Heart right ventricle (tissue), 16 donors: ENCODE measurements at regions of chr11 and their contacts with region 1.

Region 1: GRCh38 chr11:47724041-47724729 is 9.0 kb upstream of the AGBL2 start:
- DNase-seq: no peak
- ATAC-seq: peak in 7 of 8 donors; percentile 29 to 85 (median 48)
- H3K4me3 ChIP-seq: no peak overlapping the region
- H3K27ac ChIP-seq: peak overlapping the region in 6 of 10 donors; percentile 4 to 57 (median 38)
- H3K4me1 ChIP-seq: peaks cover 0 to 16% (median 10%) of the 10 kb centered on the region in 9 donors
- H3K27me3 ChIP-seq: no peaks in the 10 kb centered on the region
- CTCF ChIP-seq: no peak

Region 2: DNA sequence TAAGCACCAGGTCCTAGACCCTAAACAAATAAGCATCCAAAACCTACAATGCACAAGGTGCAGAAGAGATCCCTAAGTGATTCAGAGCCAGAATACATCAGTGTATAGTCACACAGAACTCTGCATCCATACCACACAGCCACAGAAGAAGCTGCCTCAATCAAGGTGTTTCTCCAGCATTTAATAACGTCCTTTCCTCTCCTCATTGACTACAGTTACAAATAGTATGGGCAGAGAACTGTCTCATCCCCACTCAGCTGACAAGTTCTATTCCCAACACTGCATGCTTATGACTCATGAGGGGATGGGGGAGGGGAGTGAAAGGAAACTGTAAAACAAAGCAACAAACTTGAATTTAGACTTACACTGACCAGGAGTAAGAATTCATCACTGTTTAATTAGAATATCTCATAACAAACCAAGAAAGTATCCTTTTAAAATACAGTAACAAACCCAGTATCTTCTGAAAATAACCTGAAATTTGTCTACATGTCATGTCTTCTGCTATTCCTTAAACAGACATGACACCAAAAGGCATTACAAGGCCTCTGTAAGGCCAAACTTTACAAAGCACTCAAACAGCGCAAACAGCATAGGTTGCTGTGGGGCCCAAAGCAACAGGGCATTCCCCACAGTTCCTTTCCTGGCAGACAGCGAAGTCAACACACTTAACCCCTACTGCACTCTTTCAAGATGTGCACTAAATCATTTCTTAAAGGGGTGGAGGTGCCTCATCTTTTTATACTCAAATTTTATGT is 200.5 kb before region 1 on chr11:
- intact Hi-C with region 1: no loop called
- DNase-seq: peak in 1 of 2 donors; percentile 66
- ATAC-seq: peak; percentile 74 to 93 (median 84)
- H3K4me3 ChIP-seq: peak overlapping the region in 8 of 10 donors; percentile 9 to 43 (median 37)
- H3K27ac ChIP-seq: peak overlapping the region; percentile 19 to 88 (median 70)
- H3K4me1 ChIP-seq: peaks cover 16 to 90% (median 53%) of the 10 kb centered on the region in 9 donors
- H3K27me3 ChIP-seq: no peaks in the 10 kb centered on the region
- CTCF ChIP-seq: no peak

Region 3: GRCh38 chr11:47758076-47758475 is 33.9 kb after region 1 on chr11:
- intact Hi-C with region 1: loop called in 1 of 10 experiments (anchors 5 kb)
- DNase-seq: no peak
- ATAC-seq: no peak
- H3K4me3 ChIP-seq: no peak overlapping the region
- H3K27ac ChIP-seq: no peak overlapping the region
- H3K4me1 ChIP-seq: peaks cover 0 to 10% (median 0%) of the 10 kb centered on the region in 9 donors
- H3K27me3 ChIP-seq: no peaks in the 10 kb centered on the region
- CTCF ChIP-seq: no peak

Region 4: DNA sequence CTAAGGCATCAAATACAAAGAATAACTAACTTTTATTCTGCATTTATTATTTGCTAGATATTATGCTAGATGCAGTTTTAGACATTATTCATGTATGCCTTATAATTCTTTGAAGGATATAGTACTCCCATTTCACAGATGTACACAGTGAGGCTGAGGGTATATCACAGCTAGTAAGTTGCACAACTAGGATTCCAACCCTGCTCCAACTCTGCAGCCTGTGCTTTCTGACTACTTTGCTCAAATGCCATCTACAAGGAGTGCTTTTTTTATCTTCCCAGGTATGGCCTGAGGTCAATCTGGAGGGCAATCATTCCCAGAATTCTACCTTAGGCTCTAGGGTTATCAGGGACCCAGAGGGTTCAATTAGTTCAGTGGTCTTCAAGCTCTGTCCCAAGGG is 95.6 kb after region 1 on chr11:
- intact Hi-C with region 1: loop called in 1 of 10 experiments (anchors 10 kb)
- DNase-seq: no peak
- ATAC-seq: no peak
- H3K4me3 ChIP-seq: no peak overlapping the region
- H3K27ac ChIP-seq: no peak overlapping the region
- H3K4me1 ChIP-seq: no peaks in the 10 kb centered on the region
- H3K27me3 ChIP-seq: no peaks in the 10 kb centered on the region
- CTCF ChIP-seq: no peak